ENCODE measurements at regions of chr7 and their contacts with region 1.

Region 1: DNA sequence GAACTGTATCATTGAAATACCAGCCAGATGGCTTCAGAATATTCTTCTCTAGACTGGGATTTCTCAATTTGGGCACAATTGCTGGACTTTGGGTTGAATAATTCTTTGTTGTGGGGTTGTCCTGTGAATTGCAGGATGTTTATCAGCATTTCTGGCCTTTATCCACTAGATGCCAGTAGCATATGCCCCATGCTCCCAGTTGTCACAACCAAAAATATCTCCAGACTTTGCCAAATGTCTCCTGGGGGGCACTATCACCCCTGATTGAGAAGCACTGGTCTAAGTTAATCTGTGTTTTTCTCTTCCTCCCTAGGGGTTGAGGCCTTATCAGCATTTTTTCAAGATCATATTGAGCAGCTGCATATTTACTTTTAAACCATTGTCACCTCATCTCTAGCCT is 204.9 kb upstream of the SP8 start:
- DNase-seq: peak; percentile 9
- H3K4me3 ChIP-seq: no peak overlapping the region
- H3K27ac ChIP-seq: no peak overlapping the region
- H3K4me1 ChIP-seq: no peaks in the 10 kb centered on the region
- H3K27me3 ChIP-seq: no peaks in the 10 kb centered on the region
- CTCF ChIP-seq: peak; percentile 37 to 67

Region 2: GRCh38 chr7:20778063-20778721 is 213.4 kb before region 1 on chr7:
- CTCF ChIA-PET with region 1: no interaction called
- dilution Hi-C with region 1: no loop called
- in situ Hi-C with region 1: loop called in 1 of 2 experiments (anchors 25 kb)
- intact Hi-C with region 1: loop called (anchors 2 kb)
- DNase-seq: peak; percentile 37
- H3K4me3 ChIP-seq: peak overlapping the region; percentile 52 to 77 (median 55)
- H3K27ac ChIP-seq: no peak overlapping the region
- H3K4me1 ChIP-seq: peaks cover 4% of the 10 kb centered on the region
- H3K27me3 ChIP-seq: peaks cover 17% of the 10 kb centered on the region
- CTCF ChIP-seq: peak; percentile 52 to 74

Region 3: DNA sequence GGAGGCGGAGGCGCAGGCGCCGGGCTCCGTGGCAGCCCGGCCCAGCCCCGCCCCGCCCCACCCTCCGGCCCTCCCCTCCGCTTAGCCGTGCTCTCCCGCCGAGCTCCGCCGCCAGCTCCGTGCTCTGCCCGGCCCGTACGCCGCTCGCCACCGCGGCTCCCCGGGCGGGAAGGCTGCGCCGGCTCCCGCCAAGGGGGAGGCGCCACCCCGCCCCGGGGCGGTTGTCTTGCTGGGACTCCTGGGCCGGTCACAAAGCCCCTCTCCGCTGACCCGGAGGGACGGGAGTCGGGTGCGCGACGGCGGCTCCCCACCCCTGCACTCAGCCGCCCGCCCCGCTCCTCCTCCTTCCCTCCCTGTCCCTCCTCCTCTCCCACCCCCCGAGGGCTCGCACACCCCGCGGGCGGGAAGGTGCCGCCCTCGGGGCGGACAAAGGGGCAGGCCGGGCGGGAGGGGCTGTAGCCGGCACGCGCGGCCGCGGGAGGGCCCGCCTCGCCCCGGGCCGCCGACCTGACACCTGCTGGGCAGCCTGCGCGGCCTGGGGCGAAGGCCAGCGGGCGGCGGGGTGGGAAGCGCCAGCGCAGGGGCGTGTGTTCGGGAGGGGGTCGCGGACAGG is 193.4 kb before region 1 on chr7:
- CTCF ChIA-PET with region 1: no interaction called
- dilution Hi-C with region 1: no loop called
- in situ Hi-C with region 1: loop called in 1 of 2 experiments (anchors 25 kb)
- intact Hi-C with region 1: no loop called
- DNase-seq: peak; percentile 59
- H3K4me3 ChIP-seq: peak overlapping the region; percentile 58 to 61 (median 59)
- H3K27ac ChIP-seq: no peak overlapping the region
- H3K4me1 ChIP-seq: peaks cover 6% of the 10 kb centered on the region
- H3K27me3 ChIP-seq: peaks cover under 1% of the 10 kb centered on the region
- CTCF ChIP-seq: no peak

Region 4: DNA sequence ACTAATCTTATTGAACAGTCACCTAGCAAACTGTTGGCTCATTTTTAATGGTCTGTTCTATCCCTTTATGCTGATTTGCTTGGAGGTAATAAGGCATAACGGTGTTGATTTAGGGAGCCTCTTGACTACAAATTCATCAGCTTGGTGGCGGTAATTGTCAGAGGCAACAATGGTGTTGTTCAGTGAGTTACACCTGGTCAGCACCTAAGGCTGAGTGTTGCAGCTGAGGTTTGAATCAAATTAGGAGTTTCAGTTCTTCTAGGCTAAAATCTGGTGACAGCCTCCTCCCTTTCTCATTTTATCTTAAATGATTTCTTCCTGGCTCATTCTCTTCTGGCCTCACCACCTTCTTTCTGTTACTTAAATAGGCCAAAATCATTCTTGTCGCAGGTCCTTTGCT is 162.6 kb before region 1 on chr7:
- CTCF ChIA-PET with region 1: no interaction called
- dilution Hi-C with region 1: no loop called
- in situ Hi-C with region 1: no loop called
- intact Hi-C with region 1: no loop called
- DNase-seq: no peak
- H3K4me3 ChIP-seq: no peak overlapping the region
- H3K27ac ChIP-seq: no peak overlapping the region
- H3K4me1 ChIP-seq: no peaks in the 10 kb centered on the region
- H3K27me3 ChIP-seq: no peaks in the 10 kb centered on the region
- CTCF ChIP-seq: no peak

Region 5: GRCh38 chr7:21108182-21108581 is 116.6 kb after region 1 on chr7:
- CTCF ChIA-PET with region 1: no interaction called
- dilution Hi-C with region 1: no loop called
- in situ Hi-C with region 1: no loop called
- intact Hi-C with region 1: loop called (anchors 5 kb)
- DNase-seq: no peak
- H3K4me3 ChIP-seq: no peak overlapping the region
- H3K27ac ChIP-seq: no peak overlapping the region
- H3K4me1 ChIP-seq: peaks cover 29% of the 10 kb centered on the region
- H3K27me3 ChIP-seq: no peaks in the 10 kb centered on the region
- CTCF ChIP-seq: no peak

Region 6: DNA sequence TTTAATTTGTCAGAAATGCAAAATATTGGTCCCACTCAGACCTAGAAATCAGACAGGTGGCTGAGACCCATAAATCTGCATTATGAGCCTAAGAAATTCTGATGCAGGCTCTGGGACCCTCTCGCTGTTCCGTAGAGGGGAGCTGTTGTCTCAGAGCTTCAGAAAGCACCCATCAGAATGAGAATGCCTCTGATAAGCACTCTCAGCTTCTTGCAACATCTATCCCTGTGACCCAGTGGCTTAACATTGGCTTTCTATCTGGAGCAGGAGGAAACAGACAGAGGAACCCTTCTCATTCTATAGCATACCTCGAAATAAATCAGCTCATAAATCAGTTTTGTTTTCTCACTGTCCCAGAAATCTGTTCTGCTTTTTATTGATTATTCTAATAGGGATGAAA is 251.7 kb after region 1 on chr7:
- CTCF ChIA-PET with region 1: no interaction called
- dilution Hi-C with region 1: no loop called
- in situ Hi-C with region 1: loop called (anchors 10 to 25 kb)
- intact Hi-C with region 1: no loop called
- DNase-seq: no peak
- H3K4me3 ChIP-seq: no peak overlapping the region
- H3K27ac ChIP-seq: no peak overlapping the region
- H3K4me1 ChIP-seq: no peaks in the 10 kb centered on the region
- H3K27me3 ChIP-seq: no peaks in the 10 kb centered on the region
- CTCF ChIP-seq: no peak

Measured in mammary epithelial cell (primary cell).